Activated T-helper 2 cell treated with anti-CD3 and anti-CD28 coated beads, Interferon-gamma antibody, Interleukin-2, Interleukin-4, amounts not matched to agents 10 μg/mL and 5 μg/mL and 100 μg/mL, durations not matched to agents 14 hours and 24 hours and 36 hours (primary cell): ENCODE measurements at regions of chr11 and their contacts with region 1.

Region 1: GRCh38 chr11:61028272-61028761 is 56.8 kb downstream of the CD6 start:
- DNase-seq: no peak
- H3K4me3 Mint-ChIP-seq: peak overlapping the region; percentile 84
- H3K27ac Mint-ChIP-seq: peak overlapping the region; percentile 94
- H3K4me1 Mint-ChIP-seq: peaks cover 75% of the 10 kb centered on the region
- H3K27me3 Mint-ChIP-seq: no peaks in the 10 kb centered on the region

Region 2: DNA sequence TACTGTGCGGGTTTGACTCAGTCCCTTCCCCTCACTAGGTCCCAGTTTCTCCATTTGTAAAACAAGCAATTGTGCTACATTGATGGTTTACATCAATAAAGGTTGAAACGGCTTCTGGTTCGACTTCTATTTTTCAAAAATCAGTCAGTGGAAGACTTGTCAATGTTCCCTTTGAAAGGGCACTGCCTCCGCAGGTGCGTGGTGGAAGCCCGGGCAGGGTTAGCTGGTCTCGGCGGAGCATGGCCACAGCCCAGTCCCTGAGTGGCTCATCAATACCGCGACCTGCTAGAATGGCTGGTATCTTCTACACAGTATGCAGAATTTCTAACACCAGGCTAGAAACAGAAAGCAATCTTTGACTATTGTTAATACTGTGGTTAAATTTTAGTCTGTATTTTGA is 227.1 kb before region 1 on chr11:
- intact Hi-C with region 1: no loop called
- DNase-seq: no peak
- H3K4me3 Mint-ChIP-seq: no peak overlapping the region
- H3K27ac Mint-ChIP-seq: no peak overlapping the region
- H3K4me1 Mint-ChIP-seq: peaks cover 2% of the 10 kb centered on the region
- H3K27me3 Mint-ChIP-seq: peaks cover 12% of the 10 kb centered on the region

Region 3: GRCh38 chr11:61041755-61042518 is 13.6 kb after region 1 on chr11:
- intact Hi-C with region 1: loop called (anchors 1 kb)
- DNase-seq: peak; percentile 90
- H3K4me3 Mint-ChIP-seq: peak overlapping the region; percentile 52
- H3K27ac Mint-ChIP-seq: peak overlapping the region; percentile 95
- H3K4me1 Mint-ChIP-seq: peaks cover 60% of the 10 kb centered on the region
- H3K27me3 Mint-ChIP-seq: no peaks in the 10 kb centered on the region

Region 4: DNA sequence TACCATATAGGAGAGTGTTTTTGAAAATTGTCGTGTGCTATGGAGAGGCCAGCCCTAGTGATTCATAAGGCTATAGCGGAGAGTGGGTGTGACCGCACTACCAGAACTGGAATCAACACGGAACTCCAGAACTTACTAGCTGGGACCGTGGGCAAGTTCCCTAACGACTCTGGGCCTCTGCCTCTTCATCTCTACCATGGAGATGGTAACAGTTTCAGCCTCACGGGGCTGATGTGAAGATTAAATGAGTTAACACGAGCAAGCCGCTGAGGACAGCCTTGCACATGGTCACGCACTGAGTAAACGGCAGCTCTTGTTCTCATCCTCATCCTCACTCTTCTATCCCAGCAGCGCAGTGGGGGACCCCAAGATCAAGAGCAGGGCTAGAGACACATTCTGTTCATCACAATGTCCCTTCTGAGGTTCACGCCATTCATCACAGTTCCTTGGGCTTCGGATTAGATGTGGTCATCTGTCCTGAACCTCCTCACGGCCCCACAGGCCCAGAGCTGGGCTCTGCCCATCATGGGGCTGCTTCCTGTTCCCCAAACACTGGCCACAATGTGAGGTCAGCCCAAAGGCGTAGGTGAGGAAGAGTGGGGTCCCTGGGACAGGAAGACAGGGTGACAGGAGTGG is 26.7 kb after region 1 on chr11:
- intact Hi-C with region 1: loop called (anchors 1 kb)
- DNase-seq: no peak
- H3K4me3 Mint-ChIP-seq: peak overlapping the region; percentile 47
- H3K27ac Mint-ChIP-seq: peak overlapping the region; percentile 96
- H3K4me1 Mint-ChIP-seq: peaks cover 80% of the 10 kb centered on the region
- H3K27me3 Mint-ChIP-seq: no peaks in the 10 kb centered on the region